CD8-positive, alpha-beta T cell (primary cell): ENCODE measurements at regions of chr1 and their contacts with region 1.

Region 1: DNA sequence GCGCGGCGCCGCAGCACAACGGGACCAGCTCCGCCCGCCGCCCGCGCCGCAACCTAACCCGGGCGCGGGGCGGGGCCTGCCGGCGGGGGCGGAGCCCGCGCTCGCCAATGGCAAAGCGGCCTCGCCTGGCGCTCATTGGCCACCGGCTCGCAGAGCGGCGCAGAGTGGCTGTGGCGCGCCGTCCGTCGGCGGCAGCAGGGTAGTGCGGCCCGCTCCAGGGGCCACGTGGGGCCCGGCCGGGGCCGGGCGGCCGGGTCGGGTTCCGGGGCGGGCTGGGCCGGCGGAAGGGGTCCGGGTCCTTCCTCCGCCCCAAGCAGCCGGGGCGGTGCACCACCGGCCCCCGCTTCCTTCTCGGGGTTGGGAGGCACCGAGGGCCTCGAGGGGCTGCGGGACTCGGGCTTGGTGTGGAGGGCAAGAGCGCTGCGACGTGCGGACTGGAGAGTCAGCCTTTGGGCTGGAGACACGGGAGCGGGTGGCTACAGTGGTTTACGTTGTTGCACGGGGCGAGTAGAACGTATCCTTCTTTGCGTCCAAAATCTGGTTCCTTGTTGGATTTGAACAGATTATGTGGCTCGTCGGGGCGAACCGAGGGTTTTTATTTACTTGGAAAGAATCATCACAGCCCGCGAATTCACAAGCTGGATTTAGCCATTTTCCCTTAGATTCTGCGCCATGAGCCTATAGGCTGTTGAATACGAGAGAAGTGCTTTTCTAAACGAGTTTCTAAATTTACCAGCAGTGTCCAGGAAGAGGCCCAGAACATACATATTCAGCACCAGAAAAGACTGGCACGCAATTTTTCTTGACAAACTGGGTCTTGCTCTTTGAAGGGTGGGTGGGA is at the start of gene SRM:
- DNase-seq: peak; percentile 80 to 95 (median 89)
- ATAC-seq: peak; percentile 94
- H3K4me3 ChIP-seq: peak within 1 kb of the TSS; percentile 77 to 84
- H3K4me3 Mint-ChIP-seq: peak within 1 kb of the TSS; percentile 91
- H3K27ac ChIP-seq: peak within 1 kb of the TSS; percentile 69 to 82
- H3K27ac Mint-ChIP-seq: peak within 1 kb of the TSS; percentile 92
- H3K4me1 ChIP-seq: peaks cover 22% of the 10 kb centered on the region
- H3K4me1 Mint-ChIP-seq: peaks cover 32% of the 10 kb centered on the region
- H3K27me3 ChIP-seq: no peaks in the 10 kb centered on the region
- H3K27me3 Mint-ChIP-seq: no peaks in the 10 kb centered on the region
- CTCF ChIP-seq: peak; percentile 49
- total RNA-seq, gene SRM: 31.4 to 40.6 TPM

Region 2: DNA sequence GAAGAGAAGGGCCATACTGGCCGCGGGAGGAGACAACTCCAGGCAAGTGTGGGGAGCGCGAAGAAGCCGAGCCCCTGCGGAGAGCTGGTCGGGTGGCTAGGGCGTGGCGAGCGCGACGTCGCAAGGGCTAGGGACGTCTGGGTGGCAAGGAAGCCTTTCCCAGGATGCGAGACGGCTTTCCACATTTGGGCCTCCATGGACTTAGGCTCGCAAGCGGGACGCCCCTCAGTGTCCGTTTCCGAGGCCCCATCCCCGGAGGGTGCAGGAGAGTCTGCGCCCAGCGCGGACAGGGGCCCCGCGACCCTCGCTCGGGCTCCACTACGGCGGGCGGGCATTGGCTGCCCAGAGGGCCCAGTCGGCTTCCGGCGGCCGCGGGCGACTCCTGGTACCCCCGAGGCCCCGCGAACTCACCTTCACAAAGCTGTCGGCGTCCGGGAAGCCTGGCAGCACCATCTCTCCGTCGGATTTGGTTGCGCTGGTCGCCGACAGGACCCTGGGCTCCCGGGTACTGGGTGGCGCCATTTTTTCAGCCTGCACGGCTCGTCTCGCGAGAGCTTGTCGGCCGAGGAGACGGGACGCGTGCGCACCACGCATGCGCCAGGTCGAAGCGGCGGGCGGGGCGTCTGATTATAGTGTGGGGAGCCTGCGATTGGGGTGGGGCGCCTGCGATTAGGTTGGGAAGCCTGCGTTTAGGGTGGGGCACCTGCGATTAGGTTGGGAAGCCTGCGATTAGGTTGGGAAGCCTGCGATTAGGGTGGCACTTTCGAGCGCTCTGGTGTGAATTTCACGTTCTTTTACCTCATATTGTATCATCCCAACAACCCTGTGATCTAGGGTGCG is 39.3 kb after region 1 on chr1 and contains the start of gene EXOSC10:
- CTCF ChIA-PET with region 1: interaction called, 4 read pairs
- POLR2A ChIA-PET with region 1: interaction called, 19 read pairs
- intact Hi-C with region 1: loop called (anchors 1 kb)
- DNase-seq: peak; percentile 88 to 97 (median 95)
- ATAC-seq: peak; percentile 97
- H3K4me3 ChIP-seq: peak within 1 kb of the TSS; percentile 70 to 86
- H3K4me3 Mint-ChIP-seq: peak within 1 kb of the TSS; percentile 87
- H3K27ac ChIP-seq: peak within 1 kb of the TSS; percentile 60 to 84
- H3K27ac Mint-ChIP-seq: peak within 1 kb of the TSS; percentile 96
- H3K4me1 ChIP-seq: peaks cover 12% of the 10 kb centered on the region
- H3K4me1 Mint-ChIP-seq: peaks cover 17% of the 10 kb centered on the region
- H3K27me3 ChIP-seq: no peaks in the 10 kb centered on the region
- H3K27me3 Mint-ChIP-seq: no peaks in the 10 kb centered on the region
- CTCF ChIP-seq: no peak
- total RNA-seq, gene EXOSC10: 95.0 to 98.1 TPM